ENCODE measurements at regions of chr3 and their contacts with region 1.

Region 1: GRCh38 chr3:31448035-31448881 is 84.5 kb upstream of the STT3B start:
- DNase-seq: peak; percentile 53
- ATAC-seq: peak; percentile 100
- H3K4me3 ChIP-seq: no peak overlapping the region
- H3K27ac ChIP-seq: no peak overlapping the region
- H3K4me1 ChIP-seq: 0 out of 2 replicates have a peak, but pooled peaks cover 6% of the 10 kb centered on the region
- H3K27me3 ChIP-seq: no peaks in the 10 kb centered on the region
- CTCF ChIP-seq: peak; percentile 92
- EP300 ChIP-seq: no peak
- POLR2A ChIP-seq: no peak
- RAD21 ChIP-seq: peak; percentile 88

Region 2: GRCh38 chr3:31341130-31341529 is 107.1 kb before region 1 on chr3:
- CTCF ChIA-PET with region 1: interaction called, 9 read pairs
- POLR2A ChIA-PET with region 1: no interaction called
- in situ Hi-C with region 1: no loop called
- intact Hi-C with region 1: loop called (anchors 1 kb)
- DNase-seq: peak; percentile 52
- ATAC-seq: peak; percentile 100
- H3K4me3 ChIP-seq: no peak overlapping the region
- H3K27ac ChIP-seq: no peak overlapping the region
- H3K4me1 ChIP-seq: peaks cover 19% of the 10 kb centered on the region
- H3K27me3 ChIP-seq: no peaks in the 10 kb centered on the region
- CTCF ChIP-seq: peak; percentile 80
- EP300 ChIP-seq: no peak
- POLR2A ChIP-seq: no peak
- RAD21 ChIP-seq: peak; percentile 84

Region 3: GRCh38 chr3:31405515-31405914 is 42.7 kb before region 1 on chr3:
- CTCF ChIA-PET with region 1: no interaction called
- POLR2A ChIA-PET with region 1: no interaction called
- in situ Hi-C with region 1: no loop called
- intact Hi-C with region 1: loop called (anchors 1 kb)
- DNase-seq: no peak
- ATAC-seq: no peak
- H3K4me3 ChIP-seq: no peak overlapping the region
- H3K27ac ChIP-seq: no peak overlapping the region
- H3K4me1 ChIP-seq: 0 out of 2 replicates have a peak, but pooled peaks cover 7% of the 10 kb centered on the region
- H3K27me3 ChIP-seq: no peaks in the 10 kb centered on the region; a peak in 1 of 5 replicates
- CTCF ChIP-seq: no peak
- EP300 ChIP-seq: no peak
- POLR2A ChIP-seq: no peak
- RAD21 ChIP-seq: no peak

Region 4: DNA sequence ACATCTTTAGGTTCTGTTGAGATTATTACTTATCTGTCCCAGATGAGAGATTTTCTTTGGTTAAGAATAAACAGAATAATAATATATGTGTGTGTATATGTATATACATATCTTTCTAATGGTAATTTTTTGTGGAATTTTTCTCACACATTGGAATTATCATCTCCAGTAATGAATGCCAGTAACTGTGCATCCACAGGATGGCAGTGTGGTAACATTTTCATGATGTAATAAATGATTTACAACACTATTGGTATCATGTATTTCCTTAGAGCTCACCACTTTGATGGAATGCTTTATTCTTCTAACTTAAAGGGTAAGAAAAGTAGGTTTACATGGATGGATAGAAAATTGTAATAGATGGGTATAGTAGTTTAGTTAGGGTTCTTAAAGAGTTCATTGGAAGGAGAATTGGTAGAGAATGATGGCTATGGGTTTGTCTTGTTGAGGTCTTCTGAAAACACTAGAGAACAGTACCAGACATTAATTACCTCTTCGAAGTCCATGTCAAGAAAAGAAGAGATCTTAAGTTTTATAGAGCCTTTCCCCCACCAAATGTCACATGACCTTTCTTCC is 162.5 kb after region 1 on chr3:
- CTCF ChIA-PET with region 1: no interaction called
- POLR2A ChIA-PET with region 1: no interaction called
- in situ Hi-C with region 1: no loop called
- intact Hi-C with region 1: no loop called
- DNase-seq: peak; percentile 23
- ATAC-seq: peak; percentile 53
- H3K4me3 ChIP-seq: no peak overlapping the region
- H3K27ac ChIP-seq: no peak overlapping the region
- H3K4me1 ChIP-seq: no peaks in the 10 kb centered on the region
- H3K27me3 ChIP-seq: no peaks in the 10 kb centered on the region
- CTCF ChIP-seq: peak; percentile 63
- EP300 ChIP-seq: no peak
- POLR2A ChIP-seq: no peak
- RAD21 ChIP-seq: peak; percentile 34; the same call in 1 of the 2 replicates

Measured in HepG2 (cell line).